GM12878 (cell line): ENCODE measurements at regions of chr1 and their contacts with region 1.

Region 1: DNA sequence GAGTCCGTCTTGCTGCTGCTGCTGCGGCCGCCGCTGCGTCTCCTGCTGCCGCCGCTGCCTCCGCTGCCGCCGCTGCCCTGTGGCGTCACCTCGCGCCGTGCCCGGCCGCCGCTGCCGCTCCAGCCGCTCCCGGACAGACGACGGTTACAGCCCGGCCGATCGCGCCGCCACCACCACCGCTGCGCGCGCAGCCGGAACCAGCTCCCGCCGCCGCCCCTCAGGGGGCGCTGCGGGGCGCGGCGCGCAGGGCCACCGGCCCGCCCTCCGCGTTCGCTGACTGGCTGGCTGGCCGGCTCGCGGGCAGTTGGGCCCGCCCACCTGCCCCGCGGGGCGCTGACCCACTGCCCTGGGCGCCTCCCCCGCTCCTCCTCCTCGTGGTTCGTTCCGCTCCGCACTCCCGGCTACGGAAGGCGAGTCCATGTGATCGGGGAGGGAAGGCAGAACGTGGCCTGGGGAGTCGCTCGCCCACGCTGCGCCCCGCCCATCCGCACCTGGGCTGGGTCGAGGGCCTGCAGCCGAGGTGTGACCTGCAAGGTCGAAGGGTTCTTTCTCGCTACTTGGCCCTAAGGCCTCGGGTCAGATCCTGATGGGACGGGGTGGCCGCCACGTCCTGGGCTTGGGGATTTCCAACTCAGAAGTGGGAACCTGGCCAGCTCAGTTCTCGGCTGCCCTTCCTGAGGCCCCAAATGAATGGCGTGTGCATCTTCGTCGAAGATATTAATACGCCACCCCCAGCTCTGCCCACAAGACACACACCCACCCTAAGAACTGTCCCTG is at the start of gene PTP4A2:
- DNase-seq: peak; percentile 97
- ATAC-seq: peak; percentile 76
- H3K4me3 ChIP-seq: peak within 1 kb of the TSS; percentile 84
- H3K27ac ChIP-seq: peak within 1 kb of the TSS; percentile 93
- H3K4me1 ChIP-seq: peaks cover 33% of the 10 kb centered on the region
- H3K27me3 ChIP-seq: no peaks in the 10 kb centered on the region
- CTCF ChIP-seq: peak; percentile 37 to 72 (median 56); a peak in 5 of 6 replicates
- EP300 ChIP-seq: peak; percentile 37 to 61
- POLR2A ChIP-seq: peak; percentile 73
- RAD21 ChIP-seq: no peak
- polyA plus RNA-seq, gene PTP4A2: 268 to 424 TPM

Region 2: GRCh38 chr1:31815752-31816500 is 122.4 kb before region 1 on chr1 and contains the start of gene SPOCD1:
- CTCF ChIA-PET with region 1: interaction called, 14 read pairs
- POLR2A ChIA-PET with region 1: no interaction called
- RAD21 ChIA-PET with region 1: interaction called, 7 read pairs
- SMC1A ChIA-PET with region 1: interaction called, 8 read pairs
- in situ Hi-C with region 1: no loop called
- intact Hi-C with region 1: loop called (anchors 5 kb)
- DNase-seq: peak; percentile 31
- ATAC-seq: peak; percentile 93
- H3K4me3 ChIP-seq: no peak within 1 kb of the TSS
- H3K27ac ChIP-seq: no peak within 1 kb of the TSS
- H3K4me1 ChIP-seq: no peaks in the 10 kb centered on the region
- H3K27me3 ChIP-seq: no peaks in the 10 kb centered on the region
- CTCF ChIP-seq: peak; percentile 62 to 79 (median 70)
- EP300 ChIP-seq: no peak
- POLR2A ChIP-seq: no peak
- RAD21 ChIP-seq: peak; percentile 81
- polyA plus RNA-seq, gene SPOCD1: 0.02 TPM in 1 of 2 experiments, not detected in the other

Region 3: DNA sequence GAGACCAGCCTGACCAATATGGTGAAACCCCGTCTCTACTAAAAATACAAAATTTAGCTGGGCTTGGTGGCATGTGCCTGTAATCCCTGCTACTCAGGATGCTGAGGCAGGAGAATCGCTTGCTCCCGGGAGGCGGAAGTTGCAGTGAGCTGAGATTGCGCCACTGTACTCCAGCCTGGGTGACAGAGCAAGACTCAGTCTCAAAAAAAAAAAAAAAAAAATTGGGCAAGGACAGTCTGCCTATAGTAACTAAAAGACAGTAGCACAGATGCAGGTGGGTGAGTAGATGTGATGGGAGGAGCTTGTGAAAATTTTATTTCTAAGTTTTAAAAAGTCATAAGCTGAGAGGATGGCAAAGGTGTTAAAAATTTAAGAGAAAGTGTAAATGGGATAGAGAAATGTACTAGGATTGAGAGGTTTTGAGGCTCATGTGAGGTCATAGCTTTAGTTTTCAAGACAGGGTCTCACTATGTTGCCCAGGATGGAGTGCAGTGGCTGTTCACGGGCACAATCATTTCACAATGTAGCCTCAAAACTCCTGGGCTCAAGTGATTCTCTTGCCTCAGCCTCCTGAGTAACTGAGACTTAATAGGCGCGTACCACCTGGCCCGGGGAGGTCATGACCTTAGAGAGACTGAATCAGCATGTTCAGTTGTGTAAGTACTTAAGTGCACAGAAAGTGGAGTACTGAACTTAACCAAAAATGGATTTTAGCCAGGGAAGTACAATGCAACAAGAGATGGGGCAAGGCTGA is 33.8 kb before region 1 on chr1:
- CTCF ChIA-PET with region 1: interaction called, 3 read pairs
- POLR2A ChIA-PET with region 1: interaction called, 5 read pairs
- RAD21 ChIA-PET with region 1: interaction called, 3 read pairs
- SMC1A ChIA-PET with region 1: interaction called, 15 read pairs
- in situ Hi-C with region 1: no loop called
- intact Hi-C with region 1: no loop called
- DNase-seq: no peak
- ATAC-seq: peak; percentile 16; the same call in 2 of the 3 replicates
- H3K4me3 ChIP-seq: no peak overlapping the region
- H3K27ac ChIP-seq: no peak overlapping the region
- H3K4me1 ChIP-seq: peaks cover 13% of the 10 kb centered on the region
- H3K27me3 ChIP-seq: no peaks in the 10 kb centered on the region
- CTCF ChIP-seq: no peak
- EP300 ChIP-seq: no peak
- POLR2A ChIP-seq: no peak
- RAD21 ChIP-seq: no peak

Region 4: DNA sequence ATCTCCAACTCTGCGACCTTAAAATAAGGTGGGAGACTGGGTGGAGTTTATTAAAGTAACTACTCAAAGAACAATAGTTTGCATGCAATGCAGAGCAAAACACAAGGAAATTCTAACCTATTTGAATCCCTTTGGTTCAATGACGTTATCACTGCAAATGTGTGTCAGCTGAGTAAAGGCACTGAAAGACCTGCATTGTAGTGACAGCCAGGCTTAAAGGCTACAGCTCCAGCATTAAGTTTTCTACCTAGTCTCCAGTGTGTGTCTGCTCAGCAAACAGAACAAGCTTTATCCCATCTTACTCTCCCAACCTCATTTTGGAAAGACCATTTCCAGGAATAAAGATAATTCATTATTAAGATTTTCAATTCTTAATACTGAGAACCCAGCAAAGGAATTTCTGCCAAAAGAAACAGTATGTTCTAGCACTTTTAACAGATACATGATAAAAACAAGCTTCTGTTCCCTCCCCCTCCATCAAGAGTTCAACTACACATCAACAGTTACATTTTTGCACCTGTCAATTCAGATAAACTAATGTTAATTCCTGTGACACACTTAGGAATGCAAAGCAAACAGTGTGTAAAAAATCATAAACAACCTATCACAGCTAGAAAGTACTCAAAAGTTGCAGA is 14.3 kb before region 1 on chr1:
- CTCF ChIA-PET with region 1: interaction called, 21 read pairs
- POLR2A ChIA-PET with region 1: interaction called, 17 read pairs
- RAD21 ChIA-PET with region 1: interaction called, 17 read pairs
- SMC1A ChIA-PET with region 1: interaction called, 34 read pairs
- in situ Hi-C with region 1: no loop called
- intact Hi-C with region 1: no loop called
- DNase-seq: no peak
- ATAC-seq: 0 out of 3 replicates have a peak, but pooled peaks have one; percentile 11
- H3K4me3 ChIP-seq: peak overlapping the region; percentile 43; the same call in 1 of the 2 replicates
- H3K27ac ChIP-seq: 0 out of 2 replicates have a peak overlapping the region, but pooled peaks have one; percentile 27
- H3K4me1 ChIP-seq: peaks cover 19% of the 10 kb centered on the region
- H3K27me3 ChIP-seq: no peaks in the 10 kb centered on the region
- CTCF ChIP-seq: no peak
- EP300 ChIP-seq: no peak
- POLR2A ChIP-seq: no peak
- RAD21 ChIP-seq: no peak

Region 5: DNA sequence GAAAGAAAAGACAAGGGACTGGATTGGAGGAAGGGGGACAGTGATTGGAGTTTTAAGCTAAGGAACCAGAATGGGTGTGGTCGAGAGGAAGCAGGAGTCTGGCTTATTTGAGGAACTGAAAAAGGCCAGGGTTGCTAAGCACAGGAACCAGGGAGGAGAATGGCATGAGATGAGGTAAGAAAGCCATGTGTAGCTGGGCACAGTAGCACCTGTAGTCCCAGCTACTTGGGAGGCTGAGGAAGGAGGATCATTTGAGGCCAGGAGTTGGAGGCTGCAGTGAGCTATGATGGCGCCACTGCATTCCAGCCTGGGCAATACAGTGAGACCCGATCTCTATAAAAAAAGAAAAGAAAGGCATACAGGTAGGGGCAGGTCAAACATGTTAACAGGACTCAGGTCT is 67.2 kb after region 1 on chr1:
- CTCF ChIA-PET with region 1: interaction called, 11 read pairs
- POLR2A ChIA-PET with region 1: interaction called, 3 read pairs
- RAD21 ChIA-PET with region 1: interaction called, 5 read pairs
- SMC1A ChIA-PET with region 1: interaction called, 4 read pairs
- in situ Hi-C with region 1: no loop called
- intact Hi-C with region 1: loop called (anchors 5 kb)
- DNase-seq: peak; percentile 43
- ATAC-seq: peak; percentile 88
- H3K4me3 ChIP-seq: no peak overlapping the region
- H3K27ac ChIP-seq: no peak overlapping the region
- H3K4me1 ChIP-seq: peaks cover 25% of the 10 kb centered on the region
- H3K27me3 ChIP-seq: no peaks in the 10 kb centered on the region
- CTCF ChIP-seq: no peak
- EP300 ChIP-seq: no peak
- POLR2A ChIP-seq: no peak
- RAD21 ChIP-seq: no peak